Tibial artery (tissue), 4 donors: ENCODE measurements at regions of chr3 and their contacts with region 1.

Region 1: GRCh38 chr3:106745344-106746168 is 631.7 kb upstream of the CCDC54 start:
- DNase-seq: no peak
- H3K4me3 ChIP-seq: no peak overlapping the region
- H3K27ac ChIP-seq: no peak overlapping the region
- H3K4me1 ChIP-seq: no peaks in the 10 kb centered on the region
- H3K27me3 ChIP-seq: no peaks in the 10 kb centered on the region
- CTCF ChIP-seq: no peak

Region 2: GRCh38 chr3:106707347-106707746 is 38.2 kb before region 1 on chr3:
- intact Hi-C with region 1: no loop called
- DNase-seq: no peak
- H3K4me3 ChIP-seq: no peak overlapping the region
- H3K27ac ChIP-seq: no peak overlapping the region
- H3K4me1 ChIP-seq: no peaks in the 10 kb centered on the region
- H3K27me3 ChIP-seq: no peaks in the 10 kb centered on the region
- CTCF ChIP-seq: no peak

Region 3: GRCh38 chr3:106765342-106765741 is 19.8 kb after region 1 on chr3:
- intact Hi-C with region 1: no loop called
- DNase-seq: no peak
- H3K4me3 ChIP-seq: no peak overlapping the region
- H3K27ac ChIP-seq: no peak overlapping the region
- H3K4me1 ChIP-seq: no peaks in the 10 kb centered on the region
- H3K27me3 ChIP-seq: no peaks in the 10 kb centered on the region
- CTCF ChIP-seq: no peak

Region 4: DNA sequence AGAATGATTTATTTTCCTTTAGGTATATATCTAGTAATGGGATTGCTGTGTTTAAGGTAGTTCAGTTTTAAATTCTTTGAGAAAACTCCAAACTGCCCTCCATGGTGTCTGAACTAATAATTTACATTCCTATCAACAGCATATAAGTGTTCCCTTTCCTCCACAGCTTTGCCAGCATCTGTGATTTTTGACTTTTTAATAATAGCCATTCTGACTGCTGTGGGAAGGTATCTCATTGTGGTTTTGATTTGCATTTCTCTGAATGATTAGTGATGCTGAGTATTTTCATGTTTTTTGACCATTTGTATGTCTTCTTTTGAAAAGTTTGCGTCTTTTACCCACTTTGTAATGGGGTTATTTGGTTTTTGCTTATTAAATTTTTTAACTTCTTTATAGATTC is 60.1 kb after region 1 on chr3:
- intact Hi-C with region 1: loop called (anchors 2 kb)
- DNase-seq: no peak
- H3K4me3 ChIP-seq: no peak overlapping the region
- H3K27ac ChIP-seq: no peak overlapping the region
- H3K4me1 ChIP-seq: peaks cover 0 to 14% (median 2%) of the 10 kb centered on the region in 4 donors
- H3K27me3 ChIP-seq: no peaks in the 10 kb centered on the region
- CTCF ChIP-seq: no peak